Activated CD8-positive, alpha-beta T cell treated with anti-CD3 and anti-CD28 coated beads for 36 hours (primary cell): ENCODE measurements at regions of chr10 and their contacts with region 1.

Region 1: GRCh38 chr10:75283671-75284470 is 48.1 kb upstream of the COMTD1 start:
- DNase-seq: no peak
- ATAC-seq: no peak
- H3K4me3 Mint-ChIP-seq: no peak overlapping the region
- H3K27ac Mint-ChIP-seq: no peak overlapping the region
- H3K4me1 Mint-ChIP-seq: no peaks in the 10 kb centered on the region
- H3K27me3 Mint-ChIP-seq: peaks cover 11% of the 10 kb centered on the region
- CTCF ChIP-seq: no peak

Region 2: DNA sequence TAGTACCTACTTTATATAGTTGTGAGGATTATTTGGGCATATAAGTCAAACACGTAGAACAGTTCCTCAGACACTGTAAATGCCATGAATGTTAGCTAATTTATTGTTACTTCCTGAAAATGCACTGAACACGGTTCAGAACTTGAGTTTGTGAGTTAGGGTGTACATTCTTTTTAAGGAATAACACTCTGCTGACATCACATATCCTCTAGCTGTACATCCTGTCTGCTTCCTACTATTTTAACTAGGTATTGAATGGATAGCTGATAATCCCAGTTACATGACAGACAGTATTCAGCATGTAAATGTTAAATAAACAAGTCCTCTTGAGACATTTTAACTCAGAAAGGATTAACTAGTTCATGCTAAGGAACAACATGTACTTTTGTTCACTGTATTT is 156.4 kb before region 1 on chr10:
- CTCF ChIA-PET with region 1: no interaction called
- POLR2A ChIA-PET with region 1: no interaction called
- intact Hi-C with region 1: no loop called
- DNase-seq: no peak
- ATAC-seq: no peak
- H3K4me3 Mint-ChIP-seq: no peak overlapping the region
- H3K27ac Mint-ChIP-seq: no peak overlapping the region
- H3K4me1 Mint-ChIP-seq: peaks cover 36% of the 10 kb centered on the region
- H3K27me3 Mint-ChIP-seq: no peaks in the 10 kb centered on the region
- CTCF ChIP-seq: no peak

Region 3: DNA sequence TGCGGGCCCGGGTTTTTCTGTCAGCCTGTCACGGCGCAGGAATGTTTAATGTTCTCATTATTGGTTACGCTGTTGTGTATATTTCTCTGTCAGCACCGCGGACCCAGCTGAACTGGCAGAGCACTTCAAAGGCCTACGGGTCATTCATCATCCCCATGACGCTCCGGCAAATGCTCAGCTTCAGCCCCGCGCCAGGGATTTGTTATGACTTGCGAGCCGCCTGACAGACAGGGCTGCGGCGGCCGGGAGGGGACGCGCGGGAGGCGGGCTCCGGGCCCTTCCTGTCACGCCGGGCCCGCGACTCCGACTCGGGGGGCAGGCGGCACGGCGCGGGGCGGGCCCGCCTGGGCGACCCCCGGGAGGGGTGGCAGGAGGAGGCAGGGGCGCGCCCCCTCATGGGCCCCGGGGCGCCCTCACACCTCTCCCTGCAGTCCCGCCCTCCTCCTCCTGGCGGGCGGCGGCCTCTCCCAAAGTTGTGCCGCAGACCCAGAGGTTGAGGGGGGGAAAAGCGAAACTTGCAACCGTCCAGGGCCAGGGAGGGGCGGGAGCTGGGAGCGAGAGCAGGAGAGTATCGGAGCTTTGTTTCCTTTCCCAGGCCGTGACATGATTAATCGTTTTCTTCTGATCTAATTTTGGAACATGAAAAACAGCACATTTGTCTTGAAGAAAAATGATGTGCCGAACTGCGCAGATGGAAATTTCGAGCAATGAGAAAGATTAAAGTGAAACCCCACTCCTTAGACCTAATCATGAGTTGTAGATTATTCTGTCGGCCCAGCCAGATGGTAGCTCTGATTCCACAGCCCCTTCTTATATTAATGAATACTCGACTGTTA is 11.2 kb after region 1 on chr10:
- CTCF ChIA-PET with region 1: interaction called, 10 read pairs
- POLR2A ChIA-PET with region 1: interaction called, 4 read pairs
- intact Hi-C with region 1: no loop called
- DNase-seq: peak; percentile 90
- ATAC-seq: peak; percentile 93
- H3K4me3 Mint-ChIP-seq: no peak overlapping the region
- H3K27ac Mint-ChIP-seq: no peak overlapping the region
- H3K4me1 Mint-ChIP-seq: peaks cover 2% of the 10 kb centered on the region
- H3K27me3 Mint-ChIP-seq: peaks cover 4% of the 10 kb centered on the region
- CTCF ChIP-seq: peak; percentile 30

Region 4: GRCh38 chr10:75347186-75347585 is 63.3 kb after region 1 on chr10:
- CTCF ChIA-PET with region 1: no interaction called
- POLR2A ChIA-PET with region 1: no interaction called
- intact Hi-C with region 1: no loop called
- DNase-seq: no peak
- ATAC-seq: no peak
- H3K4me3 Mint-ChIP-seq: no peak overlapping the region
- H3K27ac Mint-ChIP-seq: no peak overlapping the region
- H3K4me1 Mint-ChIP-seq: no peaks in the 10 kb centered on the region
- H3K27me3 Mint-ChIP-seq: no peaks in the 10 kb centered on the region
- CTCF ChIP-seq: no peak